ENCODE measurements at regions of chr12 and their contacts with region 1.

Region 1: GRCh38 chr12:6851921-6852650 is at the start of gene USP5:
- DNase-seq: peak; percentile 99
- ATAC-seq: peak; percentile 87
- H3K4me3 ChIP-seq: peak within 1 kb of the TSS; percentile 82
- H3K27ac ChIP-seq: peak within 1 kb of the TSS; percentile 84
- H3K4me1 ChIP-seq: peaks cover 28% of the 10 kb centered on the region
- H3K27me3 ChIP-seq: no peaks in the 10 kb centered on the region
- CTCF ChIP-seq: no peak
- EP300 ChIP-seq: no peak
- POLR2A ChIP-seq: peak; percentile 89
- RAD21 ChIP-seq: no peak
- polyA plus RNA-seq, gene USP5: 2.5 to 5.2 TPM

Region 2: GRCh38 chr12:6833189-6833890 is 18.7 kb before region 1 on chr12:
- CTCF ChIA-PET with region 1: interaction called, 72 read pairs
- POLR2A ChIA-PET with region 1: interaction called, 4 read pairs
- RAD21 ChIA-PET with region 1: interaction called, 5 read pairs
- SMC1A ChIA-PET with region 1: interaction called, 22 read pairs
- in situ Hi-C with region 1: no loop called
- intact Hi-C with region 1: no loop called
- DNase-seq: no peak
- ATAC-seq: no peak
- H3K4me3 ChIP-seq: no peak overlapping the region
- H3K27ac ChIP-seq: no peak overlapping the region
- H3K4me1 ChIP-seq: peaks cover 4% of the 10 kb centered on the region
- H3K27me3 ChIP-seq: peaks cover 11 to 17% of the 10 kb centered on the region in 2 experiments
- CTCF ChIP-seq: no peak
- EP300 ChIP-seq: no peak
- POLR2A ChIP-seq: no peak
- RAD21 ChIP-seq: no peak

Region 3: GRCh38 chr12:6839482-6840201 is 12.4 kb before region 1 on chr12:
- CTCF ChIA-PET with region 1: interaction called, 72 read pairs
- POLR2A ChIA-PET with region 1: interaction called, 7 read pairs
- RAD21 ChIA-PET with region 1: interaction called, 8 read pairs
- SMC1A ChIA-PET with region 1: interaction called, 22 read pairs
- in situ Hi-C with region 1: no loop called
- intact Hi-C with region 1: no loop called
- DNase-seq: no peak
- ATAC-seq: peak; percentile 82
- H3K4me3 ChIP-seq: no peak overlapping the region
- H3K27ac ChIP-seq: no peak overlapping the region; the same call in 1 of the 2 replicates
- H3K4me1 ChIP-seq: peaks cover 10% of the 10 kb centered on the region
- H3K27me3 ChIP-seq: no peaks in the 10 kb centered on the region
- CTCF ChIP-seq: no peak
- EP300 ChIP-seq: no peak
- POLR2A ChIP-seq: no peak
- RAD21 ChIP-seq: no peak

Region 4: GRCh38 chr12:6884539-6884938 is 32.5 kb after region 1 on chr12:
- CTCF ChIA-PET with region 1: no interaction called
- POLR2A ChIA-PET with region 1: interaction called, 12 read pairs
- RAD21 ChIA-PET with region 1: no interaction called
- SMC1A ChIA-PET with region 1: no interaction called
- in situ Hi-C with region 1: no loop called
- intact Hi-C with region 1: no loop called
- DNase-seq: no peak
- ATAC-seq: no peak
- H3K4me3 ChIP-seq: no peak overlapping the region
- H3K27ac ChIP-seq: no peak overlapping the region
- H3K4me1 ChIP-seq: no peaks in the 10 kb centered on the region
- H3K27me3 ChIP-seq: no peaks in the 10 kb centered on the region
- CTCF ChIP-seq: no peak
- EP300 ChIP-seq: no peak
- POLR2A ChIP-seq: no peak
- RAD21 ChIP-seq: no peak